Esophagus squamous epithelium (tissue), 5 donors: ENCODE measurements at regions of chr5 and their contacts with region 1.

Region 1: GRCh38 chr5:119267958-119268386 is 87.8 kb upstream of the TNFAIP8 start:
- DNase-seq: peak; percentile 55
- H3K4me3 ChIP-seq: peak overlapping the region; percentile 74 to 92 (median 82)
- H3K27ac ChIP-seq: peak overlapping the region; percentile 85 to 97 (median 96)
- H3K4me1 ChIP-seq: peaks cover 0 to 60% (median 26%) of the 10 kb centered on the region in 3 donors
- H3K27me3 ChIP-seq: no peaks in the 10 kb centered on the region
- CTCF ChIP-seq: peak in 4 of 6 experiments; percentile 16 to 64 (median 38)
- POLR2A ChIP-seq: no peak

Region 2: GRCh38 chr5:119105971-119106370 is 162.0 kb before region 1 on chr5:
- intact Hi-C with region 1: no loop called
- DNase-seq: no peak
- H3K4me3 ChIP-seq: no peak overlapping the region
- H3K27ac ChIP-seq: no peak overlapping the region
- H3K4me1 ChIP-seq: no peaks in the 10 kb centered on the region
- H3K27me3 ChIP-seq: no peaks in the 10 kb centered on the region
- CTCF ChIP-seq: no peak
- POLR2A ChIP-seq: no peak

Region 3: GRCh38 chr5:119411935-119412602 is 144.1 kb after region 1 on chr5:
- intact Hi-C with region 1: loop called (anchors 5 kb)
- DNase-seq: no peak
- H3K4me3 ChIP-seq: peak overlapping the region; percentile 33 to 70 (median 52)
- H3K27ac ChIP-seq: peak overlapping the region; percentile 85 to 87 (median 86)
- H3K4me1 ChIP-seq: peaks cover 7 to 31% (median 8%) of the 10 kb centered on the region in 3 donors
- H3K27me3 ChIP-seq: no peaks in the 10 kb centered on the region
- CTCF ChIP-seq: peak; percentile 85 to 97 (median 92)
- POLR2A ChIP-seq: no peak